Pancreas (tissue), 10 donors: ENCODE measurements at regions of chr6 and their contacts with region 1.

Region 1: DNA sequence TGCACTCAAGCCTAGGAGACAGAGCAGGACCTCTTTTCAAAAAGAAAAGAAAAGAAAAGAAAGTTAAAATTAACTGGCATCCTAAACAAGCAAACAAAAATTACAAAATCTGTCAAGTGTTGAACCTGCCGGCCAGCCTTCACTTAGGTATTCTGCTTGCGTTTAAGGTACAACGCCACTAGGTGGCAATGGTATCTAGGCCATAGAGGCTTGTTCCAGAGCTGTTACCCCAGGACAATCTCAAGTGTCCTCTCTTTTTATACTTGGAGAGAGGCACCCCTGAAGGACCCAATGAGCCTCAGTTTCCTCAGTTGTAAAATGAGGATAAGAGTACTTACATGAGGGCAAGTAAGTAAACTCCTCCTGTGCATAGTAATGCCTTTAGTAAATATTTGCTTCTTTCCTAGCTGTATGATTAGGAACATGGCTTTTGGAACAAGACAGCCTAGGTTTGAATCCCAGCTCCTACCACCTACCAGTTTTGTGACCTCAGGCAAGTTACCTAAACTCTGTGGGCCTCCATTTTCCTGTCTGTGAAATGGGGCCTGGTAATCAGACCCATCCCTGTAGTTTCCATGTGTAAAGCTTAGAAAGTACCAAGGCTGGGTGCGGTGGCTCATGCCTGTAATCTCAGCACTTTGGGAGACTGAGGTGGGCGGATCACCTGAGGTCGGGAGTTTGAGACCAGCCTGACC is 5.8 kb upstream of the PACSIN1 start:
- DNase-seq: peak in 3 of 6 donors; percentile 20 to 54 (median 40)
- ATAC-seq: peak; percentile 80 to 97 (median 90)
- H3K4me3 ChIP-seq: no peak overlapping the region
- H3K27ac ChIP-seq: no peak overlapping the region
- H3K4me1 ChIP-seq: no peaks in the 10 kb centered on the region
- H3K27me3 ChIP-seq: no peaks in the 10 kb centered on the region
- CTCF ChIP-seq: peak; percentile 12 to 62 (median 54)

Region 2: GRCh38 chr6:34602318-34603111 is 142.5 kb after region 1 on chr6:
- intact Hi-C with region 1: loop called in 1 of 3 experiments (anchors 10 kb)
- DNase-seq: peak in 3 of 6 donors; percentile 18 to 32 (median 31)
- ATAC-seq: peak; percentile 71 to 91 (median 89)
- H3K4me3 ChIP-seq: no peak overlapping the region
- H3K27ac ChIP-seq: peak overlapping the region; percentile 6 to 74 (median 38)
- H3K4me1 ChIP-seq: peaks cover 34 to 54% (median 44%) of the 10 kb centered on the region in 3 donors
- H3K27me3 ChIP-seq: no peaks in the 10 kb centered on the region
- CTCF ChIP-seq: no peak